SK-N-SH (cell line): ENCODE measurements at regions of chr1 and their contacts with region 1.

Region 1: DNA sequence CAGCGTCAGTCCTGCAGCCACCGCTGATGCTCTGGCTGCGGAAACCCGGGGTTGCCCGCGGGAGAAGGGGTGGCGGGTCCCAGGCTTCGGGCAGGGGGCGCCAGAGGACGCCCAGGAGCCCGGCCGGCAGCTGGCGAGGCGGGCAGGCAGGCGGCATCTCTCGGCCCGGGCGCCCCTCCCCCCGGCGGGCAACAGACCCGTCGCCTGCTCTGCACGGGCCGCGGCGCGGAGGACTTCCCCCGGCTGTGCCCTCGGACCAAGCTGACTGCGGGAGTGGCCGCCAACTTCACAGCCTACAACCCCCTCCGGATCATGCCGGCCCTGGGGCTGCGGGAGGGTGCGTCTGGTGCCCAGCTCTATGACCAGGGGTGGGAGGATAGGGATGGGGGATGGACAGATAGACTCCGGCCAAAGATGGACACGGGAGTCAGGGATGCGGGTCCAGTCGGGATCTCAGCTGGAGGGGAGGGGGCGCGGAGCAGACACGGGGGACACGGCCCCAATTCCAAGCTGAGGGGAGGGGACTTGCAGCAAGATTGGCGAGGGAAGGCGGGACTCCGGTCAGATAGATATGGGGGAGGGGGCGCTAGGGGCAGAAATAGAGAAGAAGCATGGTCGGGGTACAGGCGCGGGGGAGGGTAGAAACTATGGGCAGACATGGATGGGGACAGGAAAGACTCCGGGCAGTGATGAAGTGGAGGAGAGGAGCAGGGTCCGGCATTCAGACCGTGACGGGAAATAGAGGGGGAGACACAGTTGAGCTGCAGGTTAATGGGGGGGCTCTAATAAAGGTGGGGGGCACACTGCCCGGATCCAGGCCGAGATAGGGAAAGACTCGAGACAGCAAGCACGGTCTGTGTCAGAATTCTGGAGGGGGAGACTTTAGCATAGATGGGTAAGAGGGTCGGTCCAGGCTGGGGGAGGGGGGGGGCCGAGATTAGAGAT is 1.1 kb downstream of the ADGRB2 start:
- DNase-seq: peak; percentile 97
- H3K4me3 ChIP-seq: peak overlapping the region; percentile 74 to 75
- H3K27ac ChIP-seq: peak overlapping the region in 1 of 2 experiments; percentile 85; a peak in 2 of 4 replicates
- H3K4me1 ChIP-seq: peaks cover 27 to 66% of the 10 kb centered on the region in 2 experiments
- H3K27me3 ChIP-seq: no peaks in the 10 kb centered on the region
- CTCF ChIP-seq: peak; percentile 62
- EP300 ChIP-seq: peak in 1 of 2 experiments; percentile 34; a peak in 1 of 4 replicates
- RAD21 ChIP-seq: peak; percentile 75

Region 2: GRCh38 chr1:31593770-31594632 is 169.0 kb before region 1 on chr1:
- CTCF ChIA-PET with region 1: no interaction called
- POLR2A ChIA-PET with region 1: no interaction called
- DNase-seq: peak; percentile 76
- H3K4me3 ChIP-seq: peak overlapping the region in 1 of 2 experiments; percentile 0; a peak in 1 of 4 replicates
- H3K27ac ChIP-seq: no peak overlapping the region
- H3K4me1 ChIP-seq: peaks cover 9 to 10% of the 10 kb centered on the region in 2 experiments
- H3K27me3 ChIP-seq: no peaks in the 10 kb centered on the region
- CTCF ChIP-seq: peak; percentile 90
- EP300 ChIP-seq: no peak
- RAD21 ChIP-seq: peak; percentile 72

Region 3: GRCh38 chr1:31663622-31664452 is 99.2 kb before region 1 on chr1:
- CTCF ChIA-PET with region 1: interaction called, 14 read pairs
- POLR2A ChIA-PET with region 1: no interaction called
- DNase-seq: peak; percentile 93
- H3K4me3 ChIP-seq: no peak overlapping the region; a peak in 1 of 4 replicates
- H3K27ac ChIP-seq: no peak overlapping the region
- H3K4me1 ChIP-seq: peaks cover 7 to 20% of the 10 kb centered on the region in 2 experiments; a peak in 2 of 4 replicates
- H3K27me3 ChIP-seq: no peaks in the 10 kb centered on the region
- CTCF ChIP-seq: peak; percentile 90
- EP300 ChIP-seq: no peak
- RAD21 ChIP-seq: peak; percentile 94

Region 4: DNA sequence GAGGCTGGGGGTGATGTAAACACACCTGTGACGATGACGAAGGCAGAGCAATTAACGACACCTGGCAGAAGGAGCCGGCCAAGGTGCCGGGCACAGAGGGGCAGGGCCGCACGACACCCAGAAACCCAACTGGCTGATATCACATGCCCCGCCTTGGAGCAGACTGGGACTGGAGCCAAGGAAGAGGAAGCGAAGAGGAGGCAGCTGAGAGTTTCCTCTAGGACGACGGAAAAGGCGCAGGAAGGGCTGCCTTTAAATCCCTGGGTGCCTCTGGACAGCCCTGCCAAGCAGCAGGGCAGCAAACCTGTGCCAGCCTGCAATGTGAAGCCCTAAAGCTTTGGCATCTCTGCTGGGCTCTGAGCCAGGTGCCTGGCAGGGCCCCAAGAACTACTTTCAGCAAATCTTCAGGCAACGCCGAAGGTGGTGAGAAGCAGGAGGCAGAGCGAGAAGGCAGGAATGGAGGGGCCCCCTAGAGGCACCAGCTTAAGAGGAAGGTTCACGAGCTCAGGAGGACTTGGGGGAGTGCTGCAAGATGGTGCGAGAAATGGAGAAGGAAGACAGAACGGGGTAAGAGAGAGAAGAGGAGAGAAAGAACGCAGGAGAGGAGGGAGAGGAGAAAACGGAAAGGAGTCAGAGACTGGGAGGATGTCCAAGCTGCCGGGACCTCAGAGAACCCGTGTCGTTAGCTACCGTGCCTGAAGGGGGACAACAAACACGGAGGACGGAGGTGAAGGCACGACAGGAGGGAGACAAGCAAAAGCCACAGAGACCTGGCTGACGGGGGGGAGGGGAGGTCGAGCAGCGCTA is 93.0 kb before region 1 on chr1:
- CTCF ChIA-PET with region 1: interaction called, 14 read pairs
- POLR2A ChIA-PET with region 1: no interaction called
- DNase-seq: peak; percentile 56
- H3K4me3 ChIP-seq: no peak overlapping the region
- H3K27ac ChIP-seq: peak overlapping the region in 1 of 2 experiments; percentile 68; a peak in 3 of 4 replicates
- H3K4me1 ChIP-seq: peaks cover 18 to 48% of the 10 kb centered on the region in 2 experiments
- H3K27me3 ChIP-seq: no peaks in the 10 kb centered on the region
- CTCF ChIP-seq: peak; percentile 37
- EP300 ChIP-seq: no peak
- RAD21 ChIP-seq: no peak

Region 5: DNA sequence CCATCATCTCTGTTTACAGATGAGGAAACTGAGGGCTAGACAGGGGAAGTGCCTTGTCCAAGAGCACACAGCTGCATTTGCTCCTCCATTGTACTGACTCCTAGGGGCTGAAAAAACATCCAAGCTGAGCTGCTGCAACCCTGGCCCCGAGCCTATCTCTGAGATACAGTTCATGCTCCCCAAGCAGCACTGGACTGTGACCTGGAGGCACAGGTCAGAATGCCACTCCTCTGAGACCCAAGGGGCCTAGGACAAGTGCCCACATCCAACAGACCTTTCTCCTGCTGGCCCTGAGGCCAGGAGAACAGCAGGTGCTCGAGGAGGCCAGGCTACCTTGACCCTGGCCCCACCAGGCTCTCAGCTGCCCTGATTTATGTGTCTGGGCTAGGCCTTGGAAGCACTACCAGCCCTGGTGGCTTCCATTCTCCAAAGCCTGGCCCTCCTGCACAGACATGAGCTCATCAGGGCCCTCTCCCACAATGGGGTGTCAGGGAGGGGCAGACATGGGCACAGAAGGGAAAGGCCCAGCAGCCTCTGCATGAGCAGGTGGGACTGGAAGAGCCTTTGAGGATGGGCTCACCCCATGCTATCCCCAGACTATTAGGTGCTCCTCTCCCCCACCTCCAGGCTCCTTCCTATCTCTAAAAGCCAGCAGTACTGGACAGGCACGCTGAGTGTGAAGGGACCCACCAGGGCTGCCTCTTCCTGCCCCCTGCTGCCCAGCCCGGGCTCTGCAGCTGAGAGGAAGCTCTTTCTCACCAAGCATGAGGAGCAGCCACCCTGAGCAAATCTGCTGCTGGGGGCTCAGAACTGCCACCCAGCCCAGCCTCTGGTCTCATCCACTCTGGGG is 17.7 kb before region 1 on chr1:
- CTCF ChIA-PET with region 1: interaction called, 37 read pairs
- POLR2A ChIA-PET with region 1: interaction called, 3 read pairs
- DNase-seq: peak; percentile 89
- H3K4me3 ChIP-seq: no peak overlapping the region; a peak in 1 of 4 replicates
- H3K27ac ChIP-seq: peak overlapping the region in 1 of 2 experiments; percentile 18; a peak in 1 of 4 replicates
- H3K4me1 ChIP-seq: peaks cover 0 to 45% of the 10 kb centered on the region in 2 experiments; a peak in 1 of 4 replicates
- H3K27me3 ChIP-seq: no peaks in the 10 kb centered on the region
- CTCF ChIP-seq: peak; percentile 80
- EP300 ChIP-seq: no peak
- RAD21 ChIP-seq: peak; percentile 78

Region 6: GRCh38 chr1:31815752-31816500 is 52.9 kb after region 1 on chr1 and contains the start of gene SPOCD1:
- CTCF ChIA-PET with region 1: interaction called, 10 read pairs
- POLR2A ChIA-PET with region 1: no interaction called
- DNase-seq: peak; percentile 64
- H3K4me3 ChIP-seq: peak within 1 kb of the TSS in 1 of 2 experiments; percentile 47; a peak in 1 of 4 replicates
- H3K27ac ChIP-seq: peak within 1 kb of the TSS in 1 of 2 experiments; percentile 73; a peak in 1 of 4 replicates
- H3K4me1 ChIP-seq: peaks cover 0 to 32% of the 10 kb centered on the region in 2 experiments; a peak in 1 of 4 replicates
- H3K27me3 ChIP-seq: no peaks in the 10 kb centered on the region
- CTCF ChIP-seq: peak; percentile 54
- EP300 ChIP-seq: no peak
- RAD21 ChIP-seq: peak; percentile 46
- polyA plus RNA-seq, gene SPOCD1: 10.7 and 12.5 TPM in 2 replicates

Region 7: GRCh38 chr1:31891280-31891679 is 128.3 kb after region 1 on chr1:
- CTCF ChIA-PET with region 1: no interaction called
- POLR2A ChIA-PET with region 1: no interaction called
- DNase-seq: no peak
- H3K4me3 ChIP-seq: no peak overlapping the region
- H3K27ac ChIP-seq: no peak overlapping the region
- H3K4me1 ChIP-seq: no peaks in the 10 kb centered on the region
- H3K27me3 ChIP-seq: no peaks in the 10 kb centered on the region
- CTCF ChIP-seq: no peak
- EP300 ChIP-seq: no peak
- RAD21 ChIP-seq: no peak

Region 8: DNA sequence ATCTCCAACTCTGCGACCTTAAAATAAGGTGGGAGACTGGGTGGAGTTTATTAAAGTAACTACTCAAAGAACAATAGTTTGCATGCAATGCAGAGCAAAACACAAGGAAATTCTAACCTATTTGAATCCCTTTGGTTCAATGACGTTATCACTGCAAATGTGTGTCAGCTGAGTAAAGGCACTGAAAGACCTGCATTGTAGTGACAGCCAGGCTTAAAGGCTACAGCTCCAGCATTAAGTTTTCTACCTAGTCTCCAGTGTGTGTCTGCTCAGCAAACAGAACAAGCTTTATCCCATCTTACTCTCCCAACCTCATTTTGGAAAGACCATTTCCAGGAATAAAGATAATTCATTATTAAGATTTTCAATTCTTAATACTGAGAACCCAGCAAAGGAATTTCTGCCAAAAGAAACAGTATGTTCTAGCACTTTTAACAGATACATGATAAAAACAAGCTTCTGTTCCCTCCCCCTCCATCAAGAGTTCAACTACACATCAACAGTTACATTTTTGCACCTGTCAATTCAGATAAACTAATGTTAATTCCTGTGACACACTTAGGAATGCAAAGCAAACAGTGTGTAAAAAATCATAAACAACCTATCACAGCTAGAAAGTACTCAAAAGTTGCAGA is 161.0 kb after region 1 on chr1:
- CTCF ChIA-PET with region 1: no interaction called
- POLR2A ChIA-PET with region 1: no interaction called
- DNase-seq: no peak
- H3K4me3 ChIP-seq: no peak overlapping the region
- H3K27ac ChIP-seq: no peak overlapping the region
- H3K4me1 ChIP-seq: peaks cover 17 to 39% of the 10 kb centered on the region in 2 experiments; a peak in 3 of 4 replicates
- H3K27me3 ChIP-seq: no peaks in the 10 kb centered on the region
- CTCF ChIP-seq: no peak
- EP300 ChIP-seq: no peak
- RAD21 ChIP-seq: no peak